GM12878 (cell line): ENCODE measurements at regions of chr2 and their contacts with region 1.

Region 1: GRCh38 chr2:43455731-43456642 is 139.9 kb downstream of the THADA start:
- DNase-seq: peak; percentile 35
- ATAC-seq: peak; percentile 75
- H3K4me3 ChIP-seq: no peak overlapping the region
- H3K27ac ChIP-seq: peak overlapping the region; percentile 1; the same call in 1 of the 2 replicates
- H3K4me1 ChIP-seq: peaks cover 35% of the 10 kb centered on the region
- H3K27me3 ChIP-seq: no peaks in the 10 kb centered on the region
- CTCF ChIP-seq: peak; percentile 5 to 26 (median 21); a peak in 3 of 6 replicates
- EP300 ChIP-seq: peak in 1 of 2 experiments; percentile 36; a peak in 1 of 4 replicates
- POLR2A ChIP-seq: no peak
- RAD21 ChIP-seq: 0 out of 2 replicates have a peak, but pooled peaks have one; percentile 9

Region 2: DNA sequence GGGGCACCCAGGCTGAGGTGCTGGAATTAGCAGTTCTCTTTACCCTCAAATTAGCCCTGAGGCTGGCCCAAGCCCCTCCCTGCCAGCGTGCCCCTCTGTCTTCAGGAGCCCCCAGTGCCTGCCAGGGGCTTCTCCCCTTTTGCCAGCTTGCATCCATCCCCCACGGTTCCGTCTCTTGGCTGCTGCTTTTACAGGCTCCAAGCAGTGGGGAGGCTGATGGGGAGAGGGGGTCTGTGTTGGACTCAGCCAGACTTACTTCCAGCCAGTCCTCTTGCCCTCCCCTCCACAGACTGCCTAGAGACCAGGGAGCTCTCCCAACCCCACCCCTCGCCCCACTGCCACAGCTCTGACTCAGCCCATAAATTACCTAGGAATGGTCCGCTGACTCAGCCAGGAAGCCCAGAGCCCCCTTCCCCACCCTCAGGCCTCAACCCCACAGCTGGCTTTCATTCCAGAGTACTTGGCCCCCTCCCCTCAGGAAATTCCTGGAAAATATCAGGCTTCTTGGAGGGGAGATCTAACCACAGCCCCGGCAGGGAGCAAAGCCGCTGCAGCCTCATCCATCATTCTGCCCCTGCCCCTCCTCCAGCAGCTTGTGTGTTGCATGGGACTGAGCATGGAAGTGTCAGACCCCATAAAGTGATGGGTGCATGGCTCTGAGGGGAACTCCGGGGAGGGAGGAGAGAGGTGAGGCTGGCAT is 414.2 kb before region 1 on chr2:
- CTCF ChIA-PET with region 1: no interaction called
- POLR2A ChIA-PET with region 1: no interaction called
- RAD21 ChIA-PET with region 1: no interaction called
- SMC1A ChIA-PET with region 1: no interaction called
- in situ Hi-C with region 1: no loop called
- intact Hi-C with region 1: no loop called
- DNase-seq: no peak
- ATAC-seq: no peak; the same call in 2 of the 3 replicates
- H3K4me3 ChIP-seq: no peak overlapping the region
- H3K27ac ChIP-seq: no peak overlapping the region
- H3K4me1 ChIP-seq: no peaks in the 10 kb centered on the region
- H3K27me3 ChIP-seq: no peaks in the 10 kb centered on the region
- CTCF ChIP-seq: no peak
- EP300 ChIP-seq: no peak
- POLR2A ChIP-seq: no peak
- RAD21 ChIP-seq: no peak

Region 3: DNA sequence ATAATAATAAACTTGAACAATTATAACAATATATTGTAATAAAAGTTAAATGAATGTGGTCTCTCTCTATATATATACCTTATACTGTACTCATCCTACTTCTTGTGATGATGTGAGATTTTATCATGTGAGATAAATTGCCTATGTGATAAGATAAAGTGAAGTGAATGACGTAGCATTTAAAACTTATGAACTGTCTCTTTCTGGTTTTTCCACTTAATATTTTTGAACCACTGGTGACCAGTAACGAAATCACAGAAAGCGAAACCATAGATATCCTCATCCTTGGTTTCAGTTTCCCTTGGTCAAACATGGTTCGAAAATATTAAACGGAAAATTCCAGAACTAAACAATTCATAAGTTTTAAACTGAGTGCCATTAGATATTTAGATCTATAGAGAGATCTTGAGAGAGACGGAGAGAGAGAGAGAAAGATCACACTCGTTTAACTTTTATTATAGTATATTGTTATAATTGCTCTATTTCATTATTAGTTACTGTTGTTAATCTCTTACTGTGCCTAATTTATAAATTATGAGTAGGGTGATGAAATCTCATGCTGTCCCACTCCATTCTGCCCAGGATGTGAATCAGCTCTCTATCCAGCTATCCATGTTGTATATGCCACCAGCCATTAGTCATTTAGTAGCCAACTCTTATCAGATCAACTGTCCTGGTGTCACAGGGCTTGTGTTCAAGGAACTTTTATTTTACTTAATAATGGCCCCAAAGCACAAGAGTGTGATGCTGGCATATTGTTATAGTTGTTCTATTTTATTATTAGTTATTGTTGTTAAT is 16.9 kb before region 1 on chr2:
- CTCF ChIA-PET with region 1: interaction called, 16 read pairs
- POLR2A ChIA-PET with region 1: interaction called, 6 read pairs
- RAD21 ChIA-PET with region 1: interaction called, 4 read pairs
- SMC1A ChIA-PET with region 1: interaction called, 24 read pairs
- in situ Hi-C with region 1: no loop called
- intact Hi-C with region 1: no loop called
- DNase-seq: no peak
- ATAC-seq: no peak
- H3K4me3 ChIP-seq: no peak overlapping the region
- H3K27ac ChIP-seq: no peak overlapping the region
- H3K4me1 ChIP-seq: no peaks in the 10 kb centered on the region
- H3K27me3 ChIP-seq: no peaks in the 10 kb centered on the region
- CTCF ChIP-seq: no peak
- EP300 ChIP-seq: no peak
- POLR2A ChIP-seq: no peak
- RAD21 ChIP-seq: no peak

Region 4: GRCh38 chr2:43444989-43445645 is 10.9 kb before region 1 on chr2:
- CTCF ChIA-PET with region 1: interaction called, 16 read pairs
- POLR2A ChIA-PET with region 1: interaction called, 6 read pairs
- RAD21 ChIA-PET with region 1: interaction called, 4 read pairs
- SMC1A ChIA-PET with region 1: interaction called, 24 read pairs
- in situ Hi-C with region 1: no loop called
- intact Hi-C with region 1: no loop called
- DNase-seq: no peak
- ATAC-seq: no peak
- H3K4me3 ChIP-seq: no peak overlapping the region
- H3K27ac ChIP-seq: no peak overlapping the region
- H3K4me1 ChIP-seq: no peaks in the 10 kb centered on the region
- H3K27me3 ChIP-seq: no peaks in the 10 kb centered on the region
- CTCF ChIP-seq: no peak
- EP300 ChIP-seq: no peak
- POLR2A ChIP-seq: no peak
- RAD21 ChIP-seq: no peak